Endothelial cell of umbilical vein (primary cell): ENCODE measurements at regions of chr2 and their contacts with region 1.

Region 1: DNA sequence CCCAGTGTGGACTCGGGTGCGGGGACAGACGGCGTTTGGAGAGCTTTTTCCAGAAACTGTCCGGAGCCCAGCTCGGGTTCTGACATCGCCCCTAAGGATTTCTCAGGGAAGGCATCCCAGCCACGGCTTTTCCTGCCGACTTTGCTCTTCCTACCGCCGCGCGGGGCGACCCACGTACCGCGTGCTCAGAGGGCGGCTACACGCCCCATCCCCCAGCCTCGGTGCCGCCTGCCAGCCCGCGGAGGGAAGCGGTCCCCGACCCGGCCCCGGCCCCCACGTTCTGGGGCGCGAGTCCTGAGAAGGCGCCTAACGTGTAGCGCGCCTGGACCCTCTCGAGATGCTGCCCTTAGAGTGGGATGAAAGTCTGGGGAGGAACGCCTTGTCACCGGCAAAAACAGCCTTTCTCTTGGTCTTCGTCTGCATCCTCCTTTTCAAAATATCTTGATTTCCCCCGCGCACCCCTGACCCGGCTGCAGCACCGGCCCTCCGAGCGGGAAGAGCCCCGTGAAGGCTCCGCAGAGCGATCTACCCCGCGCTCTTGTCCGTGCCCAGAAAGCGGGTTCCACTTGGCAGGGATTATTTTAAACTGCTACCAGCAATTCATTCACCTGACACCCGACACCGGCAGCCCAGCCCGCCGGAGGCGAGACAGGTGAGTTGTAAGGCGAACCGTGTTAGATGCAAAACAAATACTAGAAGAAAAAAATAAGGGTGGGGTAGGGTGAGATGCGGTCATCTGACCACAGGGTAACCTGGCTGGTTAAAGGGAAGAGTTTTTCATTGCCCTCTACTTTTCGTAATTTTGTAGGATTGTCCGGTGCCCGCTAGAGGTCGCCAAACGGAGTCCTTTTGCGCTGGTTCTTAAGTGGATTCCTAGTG is 812 bp upstream of the KCNG3 start:
- DNase-seq: peak; percentile 83
- H3K4me3 ChIP-seq: peak overlapping the region; percentile 20 to 70 (median 46)
- H3K27ac ChIP-seq: no peak overlapping the region
- H3K4me1 ChIP-seq: peaks cover 6% of the 10 kb centered on the region
- H3K27me3 ChIP-seq: peaks cover 13 to 23% of the 10 kb centered on the region in 2 experiments
- CTCF ChIP-seq: peak; percentile 81 to 89
- POLR2A ChIP-seq: no peak

Region 2: DNA sequence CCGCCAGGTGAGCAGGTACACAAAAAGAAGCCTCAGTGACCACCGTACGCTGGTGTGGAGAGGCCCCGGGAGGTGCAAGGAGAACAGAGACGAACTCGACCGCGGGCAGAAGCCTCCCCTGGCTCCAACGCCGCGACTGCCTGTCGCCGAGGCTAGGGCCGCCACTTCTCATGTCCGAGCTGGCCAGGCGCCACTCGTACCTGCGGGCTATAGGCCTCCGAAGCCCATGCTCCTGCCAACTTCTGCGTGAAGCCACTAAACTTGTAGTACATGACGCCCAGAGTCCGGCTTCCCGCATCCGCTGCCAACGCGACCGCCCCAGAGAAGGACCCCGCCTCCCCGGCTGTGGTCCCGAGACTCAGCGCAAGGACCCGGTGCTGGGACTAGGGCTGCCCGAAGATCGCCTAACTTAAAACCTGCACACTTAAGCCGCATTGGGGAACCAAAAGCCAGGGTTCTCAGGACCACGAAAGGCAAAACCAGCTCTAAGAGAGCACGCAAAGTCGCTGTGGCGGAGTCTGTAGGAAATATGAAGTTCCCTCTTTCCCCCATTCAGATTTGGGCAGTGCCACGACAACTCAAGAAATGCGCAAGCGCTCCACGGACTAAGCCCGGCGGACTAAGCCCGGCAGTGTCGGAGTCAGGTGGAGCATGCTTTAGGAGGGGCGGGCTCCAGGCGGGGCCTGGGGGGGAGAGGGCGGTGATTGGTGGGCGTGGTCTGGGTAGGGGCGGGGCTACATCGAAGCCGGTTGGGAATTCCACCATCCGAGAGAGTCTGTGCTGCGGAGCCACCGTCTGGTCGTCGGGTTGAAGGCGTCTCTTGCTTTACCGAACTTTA is 133.5 kb before region 1 on chr2 and contains the start of gene COX7A2L:
- CTCF ChIA-PET with region 1: no interaction called
- POLR2A ChIA-PET with region 1: no interaction called
- dilution Hi-C with region 1: no loop called
- intact Hi-C with region 1: loop called (anchors 1 kb)
- DNase-seq: peak; percentile 97
- H3K4me3 ChIP-seq: peak within 1 kb of the TSS; percentile 61 to 92 (median 77)
- H3K27ac ChIP-seq: peak within 1 kb of the TSS; percentile 97
- H3K4me1 ChIP-seq: peaks cover 18% of the 10 kb centered on the region
- H3K27me3 ChIP-seq: peaks cover 1 to 2% of the 10 kb centered on the region in 2 experiments
- CTCF ChIP-seq: peak in 1 of 2 donors; percentile 33
- POLR2A ChIP-seq: peak; percentile 73
- total RNA-seq, gene COX7A2L: 94.2 and 101 TPM in 2 replicates

Region 3: DNA sequence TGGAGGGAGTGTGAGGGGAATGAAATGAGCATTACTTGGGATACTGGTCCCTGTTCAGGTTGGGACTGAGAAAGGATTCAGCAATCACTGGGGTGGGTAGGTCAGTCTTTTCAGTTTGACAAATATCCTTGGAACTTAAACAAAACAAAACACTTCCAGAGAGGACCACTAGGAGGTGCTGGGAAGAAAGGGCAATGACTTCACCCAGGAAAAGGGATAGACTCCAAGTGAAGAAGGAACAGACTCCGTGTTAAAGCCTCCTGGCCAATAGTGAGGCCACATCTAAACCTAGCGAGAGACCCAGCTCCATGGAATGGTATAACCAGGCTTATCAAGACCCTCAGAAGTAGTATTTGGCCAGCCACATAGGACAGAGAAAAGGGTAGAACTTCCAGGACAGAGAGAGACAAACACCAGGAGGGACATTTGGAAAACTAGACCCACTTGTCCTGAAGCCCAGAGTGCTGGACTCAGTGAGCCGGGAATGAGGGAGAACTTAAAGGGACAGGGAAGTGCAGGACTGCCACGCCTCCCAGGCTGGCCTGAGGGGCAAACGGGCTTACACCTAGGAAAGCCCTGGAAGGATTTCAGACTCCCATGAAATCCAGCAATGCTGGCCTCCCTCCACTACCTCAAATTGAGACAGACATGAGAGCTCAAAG is 18.8 kb after region 1 on chr2:
- CTCF ChIA-PET with region 1: interaction called, 3 read pairs
- POLR2A ChIA-PET with region 1: no interaction called
- dilution Hi-C with region 1: no loop called
- intact Hi-C with region 1: loop called (anchors 2 kb)
- DNase-seq: peak; percentile 49
- H3K4me3 ChIP-seq: no peak overlapping the region
- H3K27ac ChIP-seq: no peak overlapping the region
- H3K4me1 ChIP-seq: peaks cover 7% of the 10 kb centered on the region
- H3K27me3 ChIP-seq: no peaks in the 10 kb centered on the region
- CTCF ChIP-seq: peak; percentile 38 to 58
- POLR2A ChIP-seq: no peak

Region 4: GRCh38 chr2:42568401-42569115 is 74.0 kb after region 1 on chr2 and contains the start of gene MTA3:
- CTCF ChIA-PET with region 1: no interaction called
- POLR2A ChIA-PET with region 1: no interaction called
- dilution Hi-C with region 1: no loop called
- intact Hi-C with region 1: loop called (anchors 2 kb)
- DNase-seq: peak; percentile 37
- H3K4me3 ChIP-seq: peak within 1 kb of the TSS; percentile 57 to 95 (median 75)
- H3K27ac ChIP-seq: peak within 1 kb of the TSS; percentile 42
- H3K4me1 ChIP-seq: peaks cover 9% of the 10 kb centered on the region
- H3K27me3 ChIP-seq: no peaks in the 10 kb centered on the region
- CTCF ChIP-seq: no peak
- POLR2A ChIP-seq: no peak
- total RNA-seq, gene MTA3: 49.9 and 53.3 TPM in 2 replicates

Region 5: GRCh38 chr2:42770288-42771131 is 275.9 kb after region 1 on chr2:
- CTCF ChIA-PET with region 1: no interaction called
- POLR2A ChIA-PET with region 1: no interaction called
- dilution Hi-C with region 1: no loop called
- intact Hi-C with region 1: loop called (anchors 1 kb)
- DNase-seq: peak; percentile 58
- H3K4me3 ChIP-seq: no peak overlapping the region
- H3K27ac ChIP-seq: no peak overlapping the region
- H3K4me1 ChIP-seq: no peaks in the 10 kb centered on the region
- H3K27me3 ChIP-seq: no peaks in the 10 kb centered on the region
- CTCF ChIP-seq: peak; percentile 37 to 73
- POLR2A ChIP-seq: no peak

Region 6: GRCh38 chr2:42792583-42793333 is 298.2 kb after region 1 on chr2 and contains the start of gene HAAO:
- CTCF ChIA-PET with region 1: no interaction called
- POLR2A ChIA-PET with region 1: no interaction called
- dilution Hi-C with region 1: no loop called
- intact Hi-C with region 1: loop called (anchors 1 kb)
- DNase-seq: peak; percentile 21
- H3K4me3 ChIP-seq: peak within 1 kb of the TSS; percentile 33 to 47 (median 44)
- H3K27ac ChIP-seq: no peak within 1 kb of the TSS
- H3K4me1 ChIP-seq: peaks cover 4% of the 10 kb centered on the region
- H3K27me3 ChIP-seq: peaks cover 11 to 12% of the 10 kb centered on the region in 2 experiments
- CTCF ChIP-seq: peak in 1 of 2 donors; percentile 17
- POLR2A ChIP-seq: no peak
- total RNA-seq, gene HAAO: 0.60 and 0.82 TPM in 2 replicates